ENCODE measurements at regions of chr11 and their contacts with region 1.

Region 1: DNA sequence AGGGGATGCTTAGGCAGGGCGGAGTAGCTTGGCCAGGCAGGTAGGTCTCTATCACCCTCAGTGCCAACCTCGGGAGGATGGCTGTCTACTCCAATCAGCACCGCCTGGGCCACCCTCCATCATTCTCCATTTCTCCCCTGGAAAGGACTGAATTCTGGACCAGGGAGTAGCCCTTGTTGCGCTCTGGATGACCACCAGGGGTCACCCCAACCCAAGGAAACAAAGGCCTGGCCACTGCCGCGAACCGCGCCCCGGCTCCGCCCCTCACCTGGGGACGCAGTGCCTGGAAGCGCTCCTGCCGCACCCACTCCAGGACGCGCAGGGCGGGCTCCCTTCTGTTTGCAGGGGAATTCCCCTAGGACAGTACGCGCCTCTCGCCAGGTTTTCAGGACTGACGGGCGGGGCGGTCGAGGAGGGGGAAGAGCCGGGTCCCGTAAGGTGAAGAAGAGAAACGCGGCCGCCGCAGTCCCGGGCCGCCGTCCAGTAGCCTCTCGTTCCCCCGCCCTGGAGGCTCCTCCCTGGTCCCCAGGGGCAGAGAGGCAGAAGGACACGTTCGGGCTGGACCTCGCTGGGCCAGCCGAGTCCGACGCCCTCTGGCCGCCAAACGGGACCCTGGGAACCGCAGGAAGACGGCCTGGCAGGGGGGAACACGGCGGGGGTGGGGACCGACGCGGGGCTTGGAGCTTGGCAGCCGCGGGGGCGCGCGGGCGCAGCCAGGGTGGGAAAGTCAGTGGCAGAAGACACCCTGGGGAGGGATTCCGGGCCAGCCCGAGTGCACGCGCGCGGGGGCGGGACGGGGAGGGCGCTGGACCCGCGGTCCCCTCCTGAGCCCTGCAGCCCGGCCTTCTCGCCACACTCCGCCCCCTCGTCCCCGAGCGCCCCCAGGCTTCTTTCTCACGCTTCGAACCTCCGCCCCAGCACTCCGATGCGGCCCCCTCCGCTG is 7.1 kb downstream of the SCN4B start:
- DNase-seq: peak; percentile 86
- H3K4me3 ChIP-seq: peak overlapping the region; percentile 66
- H3K27ac ChIP-seq: no peak overlapping the region
- H3K4me1 ChIP-seq: peaks cover 47% of the 10 kb centered on the region
- H3K27me3 ChIP-seq: no peaks in the 10 kb centered on the region
- CTCF ChIP-seq: peak; percentile 97

Region 2: DNA sequence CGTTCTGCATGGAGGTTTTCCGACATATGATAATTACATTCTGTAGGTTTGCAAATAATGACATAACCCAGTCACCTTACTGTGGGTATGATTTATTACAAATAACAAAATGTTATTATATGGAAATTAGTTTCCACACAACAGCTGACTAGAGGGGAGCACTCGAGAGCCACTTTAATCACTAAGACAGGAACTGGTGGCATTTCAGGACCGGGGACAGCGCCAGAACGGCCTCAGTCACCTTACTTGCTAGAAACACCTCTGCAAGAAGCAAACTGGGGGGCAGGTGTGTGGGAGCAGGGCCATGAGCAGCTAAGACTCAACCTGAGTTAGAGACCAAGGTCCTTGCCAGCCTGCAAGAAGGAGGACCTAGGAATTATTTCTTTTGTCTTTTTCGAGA is 548.5 kb before region 1 on chr11:
- CTCF ChIA-PET with region 1: no interaction called
- POLR2A ChIA-PET with region 1: no interaction called
- intact Hi-C with region 1: no loop called
- DNase-seq: peak; percentile 41
- H3K4me3 ChIP-seq: no peak overlapping the region
- H3K27ac ChIP-seq: no peak overlapping the region
- H3K4me1 ChIP-seq: no peaks in the 10 kb centered on the region
- H3K27me3 ChIP-seq: peaks cover 10% of the 10 kb centered on the region
- CTCF ChIP-seq: no peak

Region 3: DNA sequence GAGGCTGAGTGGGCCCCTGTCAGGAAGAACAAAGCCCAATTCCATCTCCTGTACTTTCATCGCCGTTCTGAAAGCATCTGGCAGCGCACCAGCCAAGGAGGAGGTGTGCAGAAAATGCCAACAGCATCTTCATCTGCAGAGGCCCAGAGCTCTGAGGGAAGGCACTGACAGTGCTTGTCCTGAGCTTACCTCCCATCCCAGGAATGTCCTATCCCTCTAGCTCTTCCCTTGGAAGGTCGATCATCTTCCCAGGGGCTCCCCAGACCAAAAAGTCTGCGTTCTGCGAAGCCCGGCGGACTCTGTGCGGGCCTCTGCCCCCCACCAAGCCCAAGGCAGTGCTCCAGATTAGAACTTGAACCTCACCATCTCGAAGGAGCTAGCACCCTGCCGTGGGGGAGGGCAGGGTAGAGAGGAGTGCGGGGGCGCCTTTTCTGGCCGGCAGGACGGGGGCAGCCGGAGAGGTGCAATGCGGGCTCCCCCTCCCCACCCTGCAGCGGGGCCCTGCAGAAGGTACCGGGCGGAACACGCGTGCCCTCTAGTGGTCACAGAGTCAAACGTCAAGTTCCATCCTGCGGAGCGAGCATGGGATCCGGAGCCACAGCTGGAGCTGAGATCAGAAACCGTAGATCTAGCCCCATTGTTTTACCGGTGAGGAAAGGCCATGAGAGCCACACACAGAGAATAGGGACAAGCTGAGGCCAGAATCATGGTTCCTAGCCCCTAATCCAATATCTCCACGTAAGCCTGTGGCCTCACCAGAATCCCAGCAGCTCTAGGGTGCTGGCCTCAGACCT is 25.9 kb after region 1 on chr11:
- CTCF ChIA-PET with region 1: interaction called, 6 read pairs
- POLR2A ChIA-PET with region 1: no interaction called
- intact Hi-C with region 1: loop called (anchors 1 kb)
- DNase-seq: peak; percentile 82
- H3K4me3 ChIP-seq: no peak overlapping the region
- H3K27ac ChIP-seq: no peak overlapping the region
- H3K4me1 ChIP-seq: no peaks in the 10 kb centered on the region
- H3K27me3 ChIP-seq: peaks cover 4% of the 10 kb centered on the region
- CTCF ChIP-seq: peak; percentile 98

Region 4: DNA sequence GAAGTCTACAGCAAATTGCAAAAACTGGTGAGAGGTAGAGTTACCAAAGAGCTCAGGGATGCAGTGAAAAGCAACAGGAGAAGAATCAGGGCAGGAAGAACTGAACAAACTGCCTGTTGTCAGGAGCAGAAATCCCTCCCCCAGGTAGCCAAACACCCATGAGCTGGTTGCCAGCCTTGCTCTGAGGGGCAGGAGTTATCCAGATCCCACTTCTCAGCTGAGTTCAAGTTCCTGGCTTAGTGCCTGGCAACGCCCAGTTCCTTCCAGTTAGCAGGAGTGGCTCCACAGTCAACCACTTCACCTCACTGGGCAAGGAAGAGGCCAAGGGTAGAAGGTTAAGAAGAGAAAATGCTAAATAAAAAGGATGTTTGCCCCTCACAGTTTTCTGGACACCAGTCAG is 120.4 kb after region 1 on chr11:
- CTCF ChIA-PET with region 1: no interaction called
- POLR2A ChIA-PET with region 1: no interaction called
- intact Hi-C with region 1: no loop called
- DNase-seq: no peak
- H3K4me3 ChIP-seq: no peak overlapping the region
- H3K27ac ChIP-seq: no peak overlapping the region
- H3K4me1 ChIP-seq: no peaks in the 10 kb centered on the region
- H3K27me3 ChIP-seq: peaks cover 99% of the 10 kb centered on the region
- CTCF ChIP-seq: no peak

Region 5: GRCh38 chr11:118353084-118353710 is 207.6 kb after region 1 on chr11:
- CTCF ChIA-PET with region 1: no interaction called
- POLR2A ChIA-PET with region 1: no interaction called
- intact Hi-C with region 1: loop called (anchors 5 kb)
- DNase-seq: peak; percentile 46
- H3K4me3 ChIP-seq: no peak overlapping the region
- H3K27ac ChIP-seq: no peak overlapping the region
- H3K4me1 ChIP-seq: no peaks in the 10 kb centered on the region
- H3K27me3 ChIP-seq: peaks cover 33% of the 10 kb centered on the region
- CTCF ChIP-seq: peak; percentile 74

Region 6: GRCh38 chr11:118565051-118565450 is 419.5 kb after region 1 on chr11:
- CTCF ChIA-PET with region 1: no interaction called
- POLR2A ChIA-PET with region 1: no interaction called
- intact Hi-C with region 1: loop called (anchors 5 kb)
- DNase-seq: no peak
- H3K4me3 ChIP-seq: peak overlapping the region; percentile 32
- H3K27ac ChIP-seq: no peak overlapping the region
- H3K4me1 ChIP-seq: no peaks in the 10 kb centered on the region
- H3K27me3 ChIP-seq: no peaks in the 10 kb centered on the region
- CTCF ChIP-seq: no peak

Region 7: GRCh38 chr11:119044708-119045107 is 899.2 kb after region 1 on chr11:
- CTCF ChIA-PET with region 1: no interaction called
- POLR2A ChIA-PET with region 1: no interaction called
- intact Hi-C with region 1: no loop called
- DNase-seq: no peak
- H3K4me3 ChIP-seq: no peak overlapping the region
- H3K27ac ChIP-seq: no peak overlapping the region
- H3K4me1 ChIP-seq: no peaks in the 10 kb centered on the region
- H3K27me3 ChIP-seq: no peaks in the 10 kb centered on the region
- CTCF ChIP-seq: peak; percentile 39